ENCODE measurements at regions of chr5 and their contacts with region 1.

Region 1: GRCh38 chr5:128083033-128083810 is at the start of gene SLC12A2:
- DNase-seq: peak; percentile 90
- H3K4me3 Mint-ChIP-seq: peak within 1 kb of the TSS; percentile 93
- H3K27ac Mint-ChIP-seq: peak within 1 kb of the TSS; percentile 96
- H3K4me1 Mint-ChIP-seq: peaks cover 47% of the 10 kb centered on the region
- H3K27me3 Mint-ChIP-seq: no peaks in the 10 kb centered on the region
- total RNA-seq, gene SLC12A2: 5.3 to 6.8 TPM

Region 2: DNA sequence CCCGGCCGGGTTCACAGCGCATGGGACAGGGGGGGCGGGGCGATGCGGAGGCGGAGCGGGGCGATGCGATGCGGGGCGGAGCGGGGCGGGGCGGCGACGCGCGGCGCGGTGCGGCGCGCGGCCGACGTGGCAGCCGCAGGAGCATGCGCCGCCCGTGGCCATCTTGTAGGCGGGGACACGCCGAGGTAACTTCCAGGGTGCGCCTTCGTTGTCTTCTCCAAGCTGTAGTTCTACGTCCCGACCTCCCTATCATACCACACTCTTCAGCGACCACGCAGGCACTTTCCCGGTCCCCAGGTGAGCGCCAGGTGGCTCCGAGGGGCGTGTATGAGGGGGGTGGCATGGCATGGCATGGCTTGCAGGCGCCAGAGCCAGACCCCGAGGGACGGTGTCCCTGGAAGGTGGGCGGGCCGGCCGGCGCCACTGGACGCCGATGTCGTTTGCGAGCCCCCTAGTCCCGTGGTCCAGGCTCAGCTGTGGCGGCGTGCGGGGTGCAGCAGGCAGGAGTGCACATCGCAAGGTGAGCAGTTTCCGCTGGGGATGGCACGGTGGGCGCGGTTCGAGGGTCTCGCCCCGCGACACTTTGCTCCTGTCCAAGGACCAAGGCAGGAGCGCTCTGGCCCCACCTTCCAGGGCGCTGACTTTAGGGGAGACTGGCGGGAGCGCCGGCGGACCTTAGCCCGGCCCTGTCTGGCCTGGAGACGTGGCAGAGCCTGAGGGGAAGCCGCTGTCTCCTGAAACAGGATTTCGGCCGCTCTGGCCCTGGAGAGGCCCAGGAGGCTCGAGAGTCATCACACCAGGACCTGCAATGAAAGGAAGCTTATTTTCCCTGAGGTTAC is 565.5 kb before region 1 on chr5 and contains the start of gene PRRC1:
- CTCF ChIA-PET with region 1: no interaction called
- intact Hi-C with region 1: loop called (anchors 2 kb)
- DNase-seq: peak; percentile 83
- H3K4me3 Mint-ChIP-seq: peak within 1 kb of the TSS; percentile 81
- H3K27ac Mint-ChIP-seq: peak within 1 kb of the TSS; percentile 63
- H3K4me1 Mint-ChIP-seq: peaks cover 31% of the 10 kb centered on the region
- H3K27me3 Mint-ChIP-seq: no peaks in the 10 kb centered on the region
- total RNA-seq, gene PRRC1: 34.1 to 35.1 TPM

Region 3: GRCh38 chr5:127550652-127551409 is 532.4 kb before region 1 on chr5:
- CTCF ChIA-PET with region 1: no interaction called
- intact Hi-C with region 1: no loop called
- DNase-seq: no peak
- H3K4me3 Mint-ChIP-seq: no peak overlapping the region
- H3K27ac Mint-ChIP-seq: no peak overlapping the region
- H3K4me1 Mint-ChIP-seq: peaks cover 7% of the 10 kb centered on the region
- H3K27me3 Mint-ChIP-seq: no peaks in the 10 kb centered on the region

Region 4: GRCh38 chr5:127757576-127757975 is 325.6 kb before region 1 on chr5:
- CTCF ChIA-PET with region 1: no interaction called
- intact Hi-C with region 1: loop called (anchors 5 kb)
- DNase-seq: peak; percentile 42
- H3K4me3 Mint-ChIP-seq: no peak overlapping the region
- H3K27ac Mint-ChIP-seq: no peak overlapping the region
- H3K4me1 Mint-ChIP-seq: no peaks in the 10 kb centered on the region
- H3K27me3 Mint-ChIP-seq: peaks cover 2% of the 10 kb centered on the region

Region 5: GRCh38 chr5:127875235-127876021 is 207.8 kb before region 1 on chr5:
- CTCF ChIA-PET with region 1: no interaction called
- intact Hi-C with region 1: loop called (anchors 1 kb)
- DNase-seq: peak; percentile 59
- H3K4me3 Mint-ChIP-seq: no peak overlapping the region
- H3K27ac Mint-ChIP-seq: no peak overlapping the region
- H3K4me1 Mint-ChIP-seq: no peaks in the 10 kb centered on the region
- H3K27me3 Mint-ChIP-seq: peaks cover 3% of the 10 kb centered on the region

Region 6: DNA sequence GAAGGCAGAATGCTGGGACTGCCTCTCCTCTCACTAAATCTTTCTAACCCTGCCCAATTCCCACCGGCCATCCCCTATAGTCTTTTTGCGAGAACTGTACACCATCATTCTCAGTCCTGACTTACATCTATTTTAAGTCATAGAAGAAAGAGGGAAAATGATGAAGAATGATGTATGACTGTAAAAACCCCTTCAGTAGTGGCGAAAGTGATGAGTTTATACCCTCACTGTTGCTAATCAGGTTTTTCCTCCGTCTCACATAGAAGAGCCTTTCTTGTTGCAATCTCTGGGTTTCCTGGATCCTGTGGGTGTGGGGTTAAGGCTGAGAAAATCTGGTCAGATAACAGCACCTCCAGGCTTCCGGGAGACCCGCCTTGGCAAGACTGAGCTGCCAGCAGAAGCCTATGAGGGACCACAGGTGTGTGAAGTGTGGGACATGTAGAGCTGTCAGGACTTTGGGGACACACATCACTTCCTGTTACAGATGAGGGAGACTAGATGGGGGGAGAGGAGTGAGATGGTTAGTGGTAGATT is 146.7 kb before region 1 on chr5:
- CTCF ChIA-PET with region 1: no interaction called
- intact Hi-C with region 1: loop called (anchors 1 kb)
- DNase-seq: peak; percentile 45
- H3K4me3 Mint-ChIP-seq: no peak overlapping the region
- H3K27ac Mint-ChIP-seq: peak overlapping the region; percentile 80
- H3K4me1 Mint-ChIP-seq: peaks cover 4% of the 10 kb centered on the region
- H3K27me3 Mint-ChIP-seq: no peaks in the 10 kb centered on the region

Region 7: GRCh38 chr5:129094087-129094923 is 1011.1 kb after region 1 on chr5 and contains the start of gene ISOC1:
- CTCF ChIA-PET with region 1: no interaction called
- intact Hi-C with region 1: loop called (anchors 1 kb)
- DNase-seq: peak; percentile 91
- H3K4me3 Mint-ChIP-seq: peak within 1 kb of the TSS; percentile 83
- H3K27ac Mint-ChIP-seq: peak within 1 kb of the TSS; percentile 37
- H3K4me1 Mint-ChIP-seq: peaks cover 32% of the 10 kb centered on the region
- H3K27me3 Mint-ChIP-seq: peaks cover 6% of the 10 kb centered on the region
- total RNA-seq, gene ISOC1: 25.9 to 27.4 TPM

Measured in activated naive CD4-positive, alpha-beta T cell treated with anti-CD3 and anti-CD28 coated beads for 36 hours (primary cell).